WTC11 (cell line): ENCODE measurements at regions of chr6 and their contacts with region 1.

Region 1: DNA sequence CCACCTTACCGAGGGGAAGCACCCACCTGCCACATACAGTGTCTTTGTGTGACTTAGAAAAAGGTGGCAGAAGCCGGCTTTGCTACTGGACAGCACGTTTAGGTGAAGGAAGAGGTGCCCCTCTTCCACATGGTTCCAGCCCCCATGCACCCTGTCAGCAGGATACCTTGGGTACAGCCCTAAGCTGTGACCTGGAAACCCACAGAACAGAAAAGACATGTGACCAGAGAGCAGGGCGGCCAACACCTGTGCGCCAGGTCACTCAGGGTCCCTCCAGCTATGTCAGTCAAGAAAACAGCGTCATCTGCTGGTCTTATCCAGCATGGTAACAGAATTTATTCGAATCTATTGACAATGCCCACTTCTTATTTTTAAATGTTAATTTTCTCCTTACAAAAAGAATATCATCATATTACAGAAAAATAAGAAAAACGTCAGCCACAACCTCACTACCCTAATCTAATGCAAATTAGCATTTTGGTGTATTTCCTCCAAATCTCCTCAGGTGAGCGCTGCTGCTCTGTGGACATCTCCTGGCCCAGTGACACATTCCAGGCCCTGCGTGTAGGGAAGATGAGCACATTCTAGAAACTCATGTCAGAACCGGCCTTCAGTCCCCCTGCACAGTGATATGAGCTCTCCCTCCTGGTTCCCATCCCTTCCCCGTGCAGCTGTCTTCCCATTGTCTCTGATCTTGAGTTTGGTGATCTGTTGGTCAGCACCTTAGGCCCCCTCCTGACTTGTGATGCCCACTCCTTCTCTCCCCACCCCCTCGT is 37.2 kb downstream of the GTF2H5 start:
- DNase-seq: peak; percentile 45
- ATAC-seq: peak; percentile 88
- H3K4me3 Mint-ChIP-seq: no peak overlapping the region
- H3K27ac Mint-ChIP-seq: no peak overlapping the region
- H3K4me1 Mint-ChIP-seq: peaks cover 26% of the 10 kb centered on the region
- H3K27me3 Mint-ChIP-seq: no peaks in the 10 kb centered on the region
- CTCF ChIP-seq: peak; percentile 58

Region 2: DNA sequence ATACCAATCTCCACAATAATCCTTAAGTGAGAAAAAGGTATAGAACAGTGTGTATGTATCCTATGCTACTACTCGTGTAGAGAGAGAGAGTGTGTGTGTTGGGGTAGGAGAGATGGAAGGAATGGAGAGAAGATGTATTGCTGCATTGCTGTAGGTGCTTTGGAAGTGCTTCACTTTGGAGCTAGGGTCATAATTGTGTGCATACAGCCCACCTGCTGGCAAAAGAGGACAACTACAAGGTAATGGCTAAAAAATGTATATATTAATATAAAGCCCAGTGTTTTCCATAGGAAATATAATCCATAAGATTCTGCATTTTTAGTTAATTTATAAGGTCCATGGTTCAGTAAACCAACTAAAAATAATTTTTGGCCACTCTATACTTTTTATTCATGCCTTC is 73.4 kb before region 1 on chr6:
- CTCF ChIA-PET with region 1: interaction called, 11 read pairs
- POLR2A ChIA-PET with region 1: no interaction called
- DNase-seq: no peak
- ATAC-seq: no peak; the same call in 1 of the 2 replicates
- H3K4me3 Mint-ChIP-seq: no peak overlapping the region
- H3K27ac Mint-ChIP-seq: no peak overlapping the region
- H3K4me1 Mint-ChIP-seq: no peaks in the 10 kb centered on the region
- H3K27me3 Mint-ChIP-seq: no peaks in the 10 kb centered on the region
- CTCF ChIP-seq: no peak

Region 3: GRCh38 chr6:158143700-158144099 is 61.7 kb before region 1 on chr6:
- CTCF ChIA-PET with region 1: interaction called, 34 read pairs
- POLR2A ChIA-PET with region 1: no interaction called
- DNase-seq: peak; percentile 36
- ATAC-seq: peak; percentile 81
- H3K4me3 Mint-ChIP-seq: no peak overlapping the region
- H3K27ac Mint-ChIP-seq: no peak overlapping the region
- H3K4me1 Mint-ChIP-seq: no peaks in the 10 kb centered on the region
- H3K27me3 Mint-ChIP-seq: no peaks in the 10 kb centered on the region
- CTCF ChIP-seq: peak; percentile 27; the same call in 1 of the 2 replicates

Region 4: DNA sequence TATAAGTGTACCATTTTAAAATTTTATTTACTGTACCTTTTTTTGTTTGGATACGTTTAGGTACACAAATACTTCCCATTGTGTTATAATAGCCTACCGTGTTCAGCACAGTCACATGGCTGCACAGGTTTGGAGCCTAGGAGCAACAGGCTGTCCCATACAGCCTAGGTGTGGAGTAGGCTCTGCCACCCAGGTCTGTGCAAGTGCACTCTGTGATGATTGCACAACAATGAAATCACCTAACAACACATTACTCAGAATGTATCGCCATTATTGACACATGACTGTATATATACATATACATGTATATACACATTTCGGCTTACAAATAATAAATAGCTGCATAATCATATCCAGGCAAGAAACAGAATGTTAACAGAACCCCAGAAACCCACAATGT is 52.7 kb before region 1 on chr6:
- CTCF ChIA-PET with region 1: interaction called, 10 read pairs
- POLR2A ChIA-PET with region 1: no interaction called
- DNase-seq: no peak
- ATAC-seq: no peak
- H3K4me3 Mint-ChIP-seq: no peak overlapping the region
- H3K27ac Mint-ChIP-seq: no peak overlapping the region
- H3K4me1 Mint-ChIP-seq: peaks cover 7% of the 10 kb centered on the region
- H3K27me3 Mint-ChIP-seq: no peaks in the 10 kb centered on the region
- CTCF ChIP-seq: no peak

Region 5: GRCh38 chr6:158161566-158162255 is 43.6 kb before region 1 on chr6:
- CTCF ChIA-PET with region 1: interaction called, 10 read pairs
- POLR2A ChIA-PET with region 1: interaction called, 3 read pairs
- DNase-seq: peak; percentile 45
- ATAC-seq: peak; percentile 100
- H3K4me3 Mint-ChIP-seq: peak overlapping the region; percentile 0; the same call in 1 of the 2 replicates
- H3K27ac Mint-ChIP-seq: peak overlapping the region; percentile 1
- H3K4me1 Mint-ChIP-seq: peaks cover 25% of the 10 kb centered on the region
- H3K27me3 Mint-ChIP-seq: peaks cover 11% of the 10 kb centered on the region
- CTCF ChIP-seq: no peak

Region 6: GRCh38 chr6:158194487-158195280 is 10.7 kb before region 1 on chr6:
- CTCF ChIA-PET with region 1: interaction called, 25 read pairs
- POLR2A ChIA-PET with region 1: interaction called, 3 read pairs
- DNase-seq: no peak
- ATAC-seq: peak; percentile 82
- H3K4me3 Mint-ChIP-seq: peak overlapping the region; percentile 64
- H3K27ac Mint-ChIP-seq: peak overlapping the region; percentile 64
- H3K4me1 Mint-ChIP-seq: peaks cover 57% of the 10 kb centered on the region
- H3K27me3 Mint-ChIP-seq: no peaks in the 10 kb centered on the region
- CTCF ChIP-seq: no peak